A673 (cell line): ENCODE measurements at regions of chrX and their contacts with region 1.

Region 1: GRCh38 chrX:92232182-92232581 is 453.0 kb downstream of the PCDH11X start:
- DNase-seq: peak; percentile 43
- H3K4me3 ChIP-seq: no peak overlapping the region
- H3K27ac ChIP-seq: no peak overlapping the region
- H3K4me1 ChIP-seq: peaks cover 13% of the 10 kb centered on the region
- H3K27me3 ChIP-seq: no peaks in the 10 kb centered on the region
- CTCF ChIP-seq: peak; percentile 67

Region 2: GRCh38 chrX:93422693-93423092 is 1190.5 kb after region 1 on chrX:
- CTCF ChIA-PET with region 1: no interaction called
- POLR2A ChIA-PET with region 1: no interaction called
- intact Hi-C with region 1: loop called (anchors 10 kb)
- DNase-seq: peak; percentile 69
- H3K4me3 ChIP-seq: no peak overlapping the region
- H3K27ac ChIP-seq: no peak overlapping the region
- H3K4me1 ChIP-seq: peaks cover 5% of the 10 kb centered on the region
- H3K27me3 ChIP-seq: no peaks in the 10 kb centered on the region
- CTCF ChIP-seq: peak; percentile 79

Region 3: DNA sequence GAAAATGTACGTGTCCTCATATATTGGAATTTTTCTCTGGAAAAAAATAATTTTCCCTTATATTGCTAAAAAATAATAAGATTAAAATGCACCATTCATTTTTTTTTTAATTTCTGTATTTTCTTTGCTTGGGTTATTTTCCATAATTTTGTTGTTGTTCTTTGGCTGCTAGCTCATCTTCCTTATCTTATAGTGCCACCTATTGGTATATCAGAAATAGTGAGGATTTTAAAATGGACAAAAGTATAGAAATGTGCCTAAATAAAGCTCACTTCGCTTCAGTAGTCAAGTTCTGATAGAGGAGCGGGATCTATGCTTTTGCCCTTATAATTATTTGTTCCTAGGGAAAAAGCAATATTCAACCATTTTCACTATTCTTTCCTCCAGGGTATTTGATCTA is 1306.4 kb after region 1 on chrX:
- CTCF ChIA-PET with region 1: no interaction called
- POLR2A ChIA-PET with region 1: no interaction called
- intact Hi-C with region 1: loop called (anchors 5 kb)
- DNase-seq: peak; percentile 19
- H3K4me3 ChIP-seq: no peak overlapping the region
- H3K27ac ChIP-seq: no peak overlapping the region
- H3K4me1 ChIP-seq: no peaks in the 10 kb centered on the region
- H3K27me3 ChIP-seq: no peaks in the 10 kb centered on the region
- CTCF ChIP-seq: peak; percentile 62